ENCODE measurements at regions of chr9 and their contacts with region 1.

Region 1: DNA sequence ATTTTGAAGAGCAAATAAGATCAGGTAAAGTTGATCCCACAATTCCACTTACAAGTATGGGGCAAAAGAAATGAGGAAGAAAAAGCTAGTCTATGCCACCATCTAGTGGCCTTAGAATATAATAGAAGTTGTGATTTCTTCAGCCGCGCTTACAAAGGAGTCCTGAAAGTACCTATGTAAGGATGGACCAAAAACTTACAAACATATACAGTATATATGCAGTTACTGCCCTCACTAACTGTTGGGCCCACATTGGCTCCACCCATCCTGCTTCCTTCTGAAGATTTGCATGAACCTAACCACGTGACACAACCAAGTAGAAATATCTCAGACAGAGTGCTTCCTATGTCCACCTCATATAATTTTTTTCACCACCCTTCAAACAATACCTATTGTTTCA is 11.7 kb upstream of the OR13D1 start:
- DNase-seq: peak; percentile 55
- H3K4me3 Mint-ChIP-seq: no peak overlapping the region
- H3K27ac Mint-ChIP-seq: no peak overlapping the region
- H3K4me1 Mint-ChIP-seq: peaks cover 3% of the 10 kb centered on the region
- H3K27me3 Mint-ChIP-seq: peaks cover 4% of the 10 kb centered on the region

Region 2: DNA sequence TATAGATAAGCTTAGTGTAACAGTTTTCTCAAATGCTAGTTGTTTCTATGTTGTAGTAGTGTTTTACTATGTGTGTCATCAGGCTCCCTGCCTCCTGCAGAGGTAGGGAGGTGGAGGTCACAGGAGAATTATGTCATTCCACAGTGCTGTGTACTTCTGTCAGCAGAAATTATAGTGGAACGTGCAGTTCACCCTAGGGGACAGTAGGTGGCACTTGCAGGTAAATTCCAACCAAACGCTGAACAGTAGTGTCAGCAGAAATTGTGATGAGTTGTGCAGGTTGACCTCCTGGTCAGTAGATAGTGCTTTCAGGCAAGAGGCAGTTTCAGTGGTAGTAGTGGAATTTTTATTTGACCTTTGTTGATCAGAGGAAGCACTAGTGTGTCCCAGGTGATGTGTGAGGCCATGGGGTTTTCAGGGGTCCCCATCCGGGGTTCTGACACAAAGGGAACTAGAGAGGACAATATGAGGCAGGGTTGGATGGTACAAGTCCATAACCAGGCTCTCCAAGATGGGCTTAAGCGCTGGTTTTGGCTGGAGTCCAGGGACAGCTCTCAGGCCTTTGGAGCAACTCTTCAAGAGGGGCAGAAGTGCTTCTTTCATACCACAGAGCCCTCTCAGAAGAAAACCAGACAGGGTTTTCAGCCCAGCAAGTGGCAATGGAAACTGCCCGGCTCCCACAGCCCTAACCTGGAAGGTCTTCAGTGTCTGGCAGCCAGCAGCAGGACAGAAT is 1284.6 kb before region 1 on chr9:
- intact Hi-C with region 1: loop called (anchors 5 kb)
- DNase-seq: peak; percentile 71
- H3K4me3 Mint-ChIP-seq: no peak overlapping the region
- H3K27ac Mint-ChIP-seq: no peak overlapping the region
- H3K4me1 Mint-ChIP-seq: no peaks in the 10 kb centered on the region
- H3K27me3 Mint-ChIP-seq: no peaks in the 10 kb centered on the region

Region 3: DNA sequence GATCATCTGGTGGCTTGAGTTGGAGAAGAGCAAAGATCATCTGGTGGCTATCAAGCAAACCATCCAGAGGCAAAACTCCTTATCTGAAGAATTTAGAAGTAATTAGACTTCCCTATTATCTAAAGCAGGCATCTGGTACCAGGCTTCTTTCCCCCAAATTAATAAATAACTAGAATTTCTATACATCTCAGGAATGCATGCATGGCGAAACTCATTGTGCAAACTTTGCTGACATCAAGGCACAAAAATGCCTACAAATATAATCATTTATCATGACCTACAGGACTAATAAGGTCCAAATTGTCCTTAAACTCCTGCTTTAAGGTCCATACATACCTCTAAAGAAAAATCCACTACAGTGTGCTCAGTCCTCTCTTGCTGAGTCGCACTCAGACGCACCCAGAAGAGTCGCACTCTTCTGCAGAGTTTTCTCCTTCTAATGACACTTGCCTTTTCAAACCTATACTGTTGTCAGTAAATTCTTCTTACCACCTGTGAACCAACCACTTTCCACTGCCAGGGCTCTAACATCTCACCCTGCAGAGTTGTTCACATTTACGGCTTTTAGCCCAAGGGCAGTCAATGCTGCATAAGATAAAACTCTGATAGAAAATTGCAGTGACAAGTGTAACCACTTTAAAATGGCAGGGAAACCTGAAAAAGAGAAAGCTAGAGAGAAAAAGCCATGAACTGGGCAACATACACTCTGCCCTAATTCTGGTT is 17.8 kb after region 1 on chr9:
- intact Hi-C with region 1: no loop called
- DNase-seq: no peak
- H3K4me3 Mint-ChIP-seq: no peak overlapping the region
- H3K27ac Mint-ChIP-seq: no peak overlapping the region
- H3K4me1 Mint-ChIP-seq: no peaks in the 10 kb centered on the region
- H3K27me3 Mint-ChIP-seq: no peaks in the 10 kb centered on the region

Region 4: DNA sequence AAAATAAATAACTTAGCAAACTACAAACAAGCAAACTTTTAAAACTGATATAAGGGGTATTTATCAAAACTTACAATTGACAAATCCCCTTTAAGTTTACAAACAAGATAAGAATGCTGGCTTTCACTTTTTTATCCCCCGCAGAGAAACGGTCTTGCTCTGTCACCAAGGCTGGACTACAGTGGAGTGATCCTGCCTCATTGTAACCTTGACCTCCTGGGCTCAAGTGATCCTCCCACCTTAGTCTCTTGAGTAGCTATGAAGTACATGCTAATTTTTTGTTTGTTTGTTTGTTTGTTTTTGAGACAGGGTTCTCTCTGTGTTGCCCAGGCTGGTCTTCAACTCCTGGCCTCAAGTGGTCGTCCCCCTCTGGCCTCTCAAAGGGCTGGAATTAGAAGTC is 55.8 kb after region 1 on chr9:
- intact Hi-C with region 1: no loop called
- DNase-seq: no peak
- H3K4me3 Mint-ChIP-seq: no peak overlapping the region
- H3K27ac Mint-ChIP-seq: no peak overlapping the region
- H3K4me1 Mint-ChIP-seq: peaks cover 2% of the 10 kb centered on the region
- H3K27me3 Mint-ChIP-seq: no peaks in the 10 kb centered on the region